ENCODE measurements at regions of chr20 and their contacts with region 1.

Region 1: DNA sequence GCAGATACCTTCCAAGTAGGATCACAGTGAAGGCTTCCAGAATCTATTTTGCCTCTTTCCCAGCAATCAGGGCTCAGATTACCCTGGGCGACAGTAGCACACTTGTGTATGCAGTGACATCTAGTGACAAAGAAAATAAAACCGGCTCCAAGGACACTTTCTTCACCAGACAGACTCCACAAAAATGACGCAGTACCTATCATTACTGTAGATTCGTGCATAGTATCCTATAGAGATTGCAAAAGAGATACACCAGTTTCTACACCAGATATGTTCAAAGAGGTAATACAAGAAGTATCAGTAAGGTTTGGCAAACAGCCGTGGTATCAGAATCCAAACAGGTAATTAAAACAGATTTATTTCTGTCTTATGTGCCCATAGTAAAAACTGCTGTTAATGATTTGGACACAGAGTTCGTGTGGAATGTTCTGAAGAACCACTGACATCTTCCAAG is 600.4 kb upstream of the JAG1 start:
- DNase-seq: peak; percentile 79
- ATAC-seq: peak; percentile 94
- H3K4me3 ChIP-seq: no peak overlapping the region
- H3K27ac ChIP-seq: no peak overlapping the region
- H3K4me1 ChIP-seq: no peaks in the 10 kb centered on the region
- H3K27me3 ChIP-seq: no peaks in the 10 kb centered on the region
- CTCF ChIP-seq: peak; percentile 78
- POLR2A ChIP-seq: no peak
- RAD21 ChIP-seq: peak; percentile 90

Region 2: DNA sequence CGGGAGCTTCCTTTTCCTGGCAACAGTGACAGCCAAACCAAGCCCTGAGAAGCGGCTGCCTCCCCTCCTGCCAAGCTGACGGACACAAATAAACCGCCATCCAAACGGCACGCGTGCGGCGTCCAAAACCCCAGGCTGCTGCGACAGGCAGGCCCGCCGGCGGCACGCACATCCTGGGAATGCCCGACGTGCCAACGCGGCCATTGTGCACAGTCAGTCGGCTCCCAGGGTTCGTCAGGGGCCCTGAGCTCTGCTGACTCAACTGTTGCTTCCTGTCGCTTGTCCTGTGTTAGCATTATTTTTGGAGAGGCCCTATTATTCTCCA is 607.1 kb before region 1 on chr20:
- CTCF ChIA-PET with region 1: no interaction called
- POLR2A ChIA-PET with region 1: no interaction called
- dilution Hi-C with region 1: no loop called
- in situ Hi-C with region 1: loop called (anchors 10 kb)
- intact Hi-C with region 1: no loop called
- DNase-seq: no peak
- ATAC-seq: no peak
- H3K4me3 ChIP-seq: no peak overlapping the region
- H3K27ac ChIP-seq: no peak overlapping the region
- H3K4me1 ChIP-seq: peaks cover 12% of the 10 kb centered on the region
- H3K27me3 ChIP-seq: no peaks in the 10 kb centered on the region
- CTCF ChIP-seq: no peak
- POLR2A ChIP-seq: no peak
- RAD21 ChIP-seq: no peak

Region 3: GRCh38 chr20:10793766-10794165 is 480.4 kb before region 1 on chr20:
- CTCF ChIA-PET with region 1: no interaction called
- POLR2A ChIA-PET with region 1: no interaction called
- dilution Hi-C with region 1: no loop called
- in situ Hi-C with region 1: no loop called
- intact Hi-C with region 1: no loop called
- DNase-seq: no peak
- ATAC-seq: no peak
- H3K4me3 ChIP-seq: no peak overlapping the region
- H3K27ac ChIP-seq: no peak overlapping the region
- H3K4me1 ChIP-seq: peaks cover 2% of the 10 kb centered on the region; the same call in 1 of the 2 replicates
- H3K27me3 ChIP-seq: peaks cover 3% of the 10 kb centered on the region; the same call in 1 of the 2 replicates
- CTCF ChIP-seq: no peak
- POLR2A ChIP-seq: no peak
- RAD21 ChIP-seq: no peak